ENCODE measurements at regions of chr10 and their contacts with region 1.

Region 1: DNA sequence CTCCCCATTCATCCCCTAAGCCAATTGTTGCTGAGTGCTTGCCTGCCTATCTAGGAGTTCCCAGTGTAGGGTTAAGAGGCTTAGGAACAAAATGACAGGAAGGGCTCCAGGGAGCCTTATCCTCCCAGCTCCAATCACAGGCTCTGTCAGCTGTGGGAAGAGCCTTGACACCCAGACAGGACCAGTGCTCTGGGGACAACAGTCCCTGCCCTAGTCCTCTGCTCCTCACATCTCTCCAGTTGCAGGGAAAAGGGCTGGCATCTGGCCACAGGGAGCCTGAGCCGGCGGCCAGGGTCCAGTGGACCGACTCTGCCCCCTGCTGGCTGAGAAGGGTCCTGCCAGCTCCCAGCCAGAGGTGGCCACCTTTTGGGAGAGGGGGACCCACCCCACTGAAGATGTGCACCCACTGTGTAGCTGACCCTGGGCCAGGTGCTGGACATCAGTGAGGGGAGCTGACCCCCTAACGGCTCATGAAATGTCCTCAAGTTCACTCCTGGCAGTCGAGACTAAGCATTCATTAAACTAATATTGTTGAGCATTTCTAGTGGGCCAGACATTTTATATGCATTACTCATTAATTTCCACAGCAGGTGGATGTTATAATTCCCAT is 17.6 kb downstream of the DNAJB12 start:
- DNase-seq: peak in 8 of 9 experiments; percentile 46 to 85 (median 72)
- ATAC-seq: no peak
- H3K4me3 ChIP-seq: no peak overlapping the region
- H3K4me3 Mint-ChIP-seq: no peak overlapping the region
- H3K27ac ChIP-seq: no peak overlapping the region
- H3K27ac Mint-ChIP-seq: peak overlapping the region; percentile 66
- H3K4me1 ChIP-seq: peaks cover 55% of the 10 kb centered on the region
- H3K4me1 Mint-ChIP-seq: peaks cover 55% of the 10 kb centered on the region
- H3K27me3 ChIP-seq: no peaks in the 10 kb centered on the region
- H3K27me3 Mint-ChIP-seq: no peaks in the 10 kb centered on the region
- CTCF ChIP-seq: peak; percentile 96

Region 2: DNA sequence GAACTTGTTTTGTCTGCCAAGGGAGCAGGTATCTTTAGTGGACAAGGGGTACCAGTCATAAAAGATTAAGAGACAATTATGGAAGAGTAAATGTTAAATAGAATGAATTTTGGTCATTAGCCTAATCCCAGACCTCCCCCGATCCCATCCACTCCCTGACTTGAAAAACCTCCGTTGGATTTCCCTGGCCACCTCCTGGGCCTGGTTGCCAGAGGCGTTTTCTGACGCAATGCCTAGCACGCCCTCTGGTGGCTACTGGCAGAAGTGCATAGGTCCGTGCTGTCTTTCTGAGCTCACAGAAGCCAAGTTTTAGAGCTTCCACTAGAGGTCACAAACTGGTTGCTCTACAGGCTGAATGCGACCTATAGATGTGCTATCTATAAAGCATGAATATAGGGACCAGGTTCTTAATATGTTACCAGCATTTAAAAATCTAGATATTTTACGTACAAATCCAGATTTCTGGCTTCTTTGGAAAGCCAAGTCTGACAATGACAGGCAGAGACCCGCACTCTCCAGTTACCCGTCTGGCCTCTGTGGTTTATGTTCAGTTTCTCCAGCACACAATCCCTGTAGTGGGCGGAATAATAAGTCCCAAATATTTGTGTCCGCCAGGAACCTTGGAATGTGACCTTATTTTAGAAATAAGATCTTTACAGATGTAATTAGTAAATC is 288.5 kb before region 1 on chr10:
- CTCF ChIA-PET with region 1: interaction called, 51 read pairs
- POLR2A ChIA-PET with region 1: no interaction called
- intact Hi-C with region 1: loop called (anchors 1 kb)
- DNase-seq: peak; percentile 80 to 95 (median 90)
- ATAC-seq: peak; percentile 98
- H3K4me3 ChIP-seq: no peak overlapping the region
- H3K4me3 Mint-ChIP-seq: no peak overlapping the region
- H3K27ac ChIP-seq: no peak overlapping the region
- H3K27ac Mint-ChIP-seq: no peak overlapping the region
- H3K4me1 ChIP-seq: no peaks in the 10 kb centered on the region
- H3K4me1 Mint-ChIP-seq: peaks cover 7% of the 10 kb centered on the region
- H3K27me3 ChIP-seq: no peaks in the 10 kb centered on the region
- H3K27me3 Mint-ChIP-seq: no peaks in the 10 kb centered on the region
- CTCF ChIP-seq: peak; percentile 99

Region 3: GRCh38 chr10:72126184-72126871 is 210.8 kb before region 1 on chr10:
- CTCF ChIA-PET with region 1: interaction called, 84 read pairs
- POLR2A ChIA-PET with region 1: interaction called, 3 read pairs
- intact Hi-C with region 1: no loop called
- DNase-seq: peak in 2 of 9 experiments; percentile 43 to 57
- ATAC-seq: no peak
- H3K4me3 ChIP-seq: no peak overlapping the region
- H3K4me3 Mint-ChIP-seq: no peak overlapping the region
- H3K27ac ChIP-seq: no peak overlapping the region
- H3K27ac Mint-ChIP-seq: no peak overlapping the region
- H3K4me1 ChIP-seq: peaks cover 12% of the 10 kb centered on the region
- H3K4me1 Mint-ChIP-seq: peaks cover 29% of the 10 kb centered on the region
- H3K27me3 ChIP-seq: no peaks in the 10 kb centered on the region
- H3K27me3 Mint-ChIP-seq: no peaks in the 10 kb centered on the region
- CTCF ChIP-seq: no peak

Region 4: DNA sequence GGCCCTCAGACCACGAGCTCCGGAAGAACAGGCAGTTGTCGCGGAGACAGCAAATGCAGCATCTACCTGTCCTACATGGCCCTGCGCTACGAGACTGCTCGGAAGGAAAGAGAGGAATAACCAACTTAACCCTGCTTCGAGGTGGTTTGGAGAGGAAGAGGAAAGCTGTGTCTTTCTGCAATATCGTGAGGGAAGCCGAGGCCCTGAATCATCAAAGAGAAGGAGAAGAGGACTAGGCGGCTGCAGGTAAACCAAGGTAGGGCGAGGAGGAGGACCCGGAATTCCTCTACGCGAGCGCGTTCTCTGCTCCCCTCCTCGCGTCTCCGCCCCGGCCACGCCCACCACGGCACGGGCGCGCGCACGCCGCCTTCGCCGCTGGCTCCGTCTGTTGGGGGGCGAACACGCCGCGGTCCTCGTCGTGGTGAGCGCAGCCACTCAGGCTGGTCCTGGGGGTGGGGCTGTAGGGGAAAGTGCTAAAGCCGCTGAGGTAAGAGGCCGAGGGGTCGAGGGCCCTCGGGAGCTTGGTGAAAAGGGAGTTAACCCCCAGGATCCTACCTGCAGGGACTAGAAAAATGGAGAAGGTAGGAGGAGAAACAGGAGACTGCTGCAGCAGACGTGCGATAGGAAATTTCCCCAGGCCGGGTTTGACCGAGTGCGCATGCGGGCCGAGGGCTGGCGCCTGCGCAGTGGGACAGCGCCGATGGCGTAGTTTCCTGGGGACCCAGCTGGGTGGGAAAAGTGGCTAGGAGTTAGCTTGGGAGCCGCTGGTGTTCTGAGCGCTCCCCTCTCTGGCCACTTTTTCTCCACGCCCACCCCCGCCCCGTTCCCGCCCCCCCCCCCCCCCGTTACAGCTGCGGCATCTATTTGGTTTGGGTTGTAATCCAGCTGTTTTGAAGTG is 121.2 kb before region 1 on chr10 and contains the starts of genes ANAPC16 and ASCC1:
- CTCF ChIA-PET with region 1: interaction called, 9 read pairs
- POLR2A ChIA-PET with region 1: interaction called, 7 read pairs
- intact Hi-C with region 1: loop called (anchors 1 to 2 kb)
- DNase-seq: peak; percentile 90 to 98 (median 95)
- ATAC-seq: peak; percentile 83
- H3K4me3 ChIP-seq: peak within 1 kb of the TSS; percentile 78 to 82
- H3K4me3 Mint-ChIP-seq: peak within 1 kb of the TSS; percentile 100
- H3K27ac ChIP-seq: peak within 1 kb of the TSS; percentile 61 to 93
- H3K27ac Mint-ChIP-seq: peak within 1 kb of the TSS; percentile 100
- H3K4me1 ChIP-seq: peaks cover 58% of the 10 kb centered on the region
- H3K4me1 Mint-ChIP-seq: peaks cover 54% of the 10 kb centered on the region
- H3K27me3 ChIP-seq: no peaks in the 10 kb centered on the region
- H3K27me3 Mint-ChIP-seq: no peaks in the 10 kb centered on the region
- CTCF ChIP-seq: no peak
- total RNA-seq, gene ANAPC16: 46.6 to 48.0 TPM
- total RNA-seq, gene ASCC1: 16.5 to 19.1 TPM

Region 5: DNA sequence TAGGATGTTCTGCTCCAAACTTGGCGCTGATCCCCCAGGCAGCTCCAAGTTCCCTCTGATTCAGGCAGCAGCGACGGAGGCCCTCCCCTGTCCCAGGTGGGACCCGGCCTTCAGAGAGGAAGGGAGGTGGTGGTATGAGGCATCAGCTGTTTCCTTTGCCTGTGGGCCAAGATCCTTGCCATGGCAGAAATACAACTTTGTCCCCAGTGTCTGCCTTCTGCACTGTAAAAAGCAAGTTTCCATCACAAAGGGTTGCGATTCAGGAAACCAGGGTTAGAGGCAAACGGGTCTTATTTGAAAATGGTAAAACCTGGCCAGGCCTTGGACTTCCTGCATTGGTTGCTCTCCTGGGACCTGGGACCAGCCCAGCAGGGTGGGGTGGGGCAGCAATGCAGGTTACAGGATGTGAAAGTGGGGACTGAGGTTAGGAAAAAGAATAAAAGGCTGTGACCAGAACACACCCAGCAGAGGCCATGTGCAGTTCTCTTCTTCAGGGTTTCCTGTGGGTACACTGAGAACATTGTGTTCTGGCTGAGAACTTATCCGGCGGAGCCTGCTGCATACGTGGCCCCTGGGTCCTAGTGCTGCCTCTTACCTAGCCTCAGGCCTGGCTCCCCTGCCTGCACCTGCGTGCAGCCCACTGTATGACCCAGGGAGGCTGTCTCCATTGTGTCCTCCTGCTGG is 88.5 kb before region 1 on chr10:
- CTCF ChIA-PET with region 1: interaction called, 56 read pairs
- POLR2A ChIA-PET with region 1: interaction called, 5 read pairs
- intact Hi-C with region 1: loop called (anchors 1 kb)
- DNase-seq: peak; percentile 40 to 91 (median 77)
- ATAC-seq: peak; percentile 88
- H3K4me3 ChIP-seq: peak overlapping the region; percentile 25 to 28
- H3K4me3 Mint-ChIP-seq: peak overlapping the region; percentile 81
- H3K27ac ChIP-seq: peak overlapping the region; percentile 61 to 64
- H3K27ac Mint-ChIP-seq: peak overlapping the region; percentile 96
- H3K4me1 ChIP-seq: peaks cover 90% of the 10 kb centered on the region
- H3K4me1 Mint-ChIP-seq: peaks cover 82% of the 10 kb centered on the region
- H3K27me3 ChIP-seq: no peaks in the 10 kb centered on the region
- H3K27me3 Mint-ChIP-seq: no peaks in the 10 kb centered on the region
- CTCF ChIP-seq: no peak

Region 6: GRCh38 chr10:72354478-72355213 is 17.5 kb after region 1 on chr10 and contains the start of gene DNAJB12:
- CTCF ChIA-PET with region 1: interaction called, 68 read pairs
- POLR2A ChIA-PET with region 1: no interaction called
- intact Hi-C with region 1: loop called in 1 of 2 experiments (anchors 2 kb)
- DNase-seq: peak; percentile 76 to 95 (median 88)
- ATAC-seq: peak; percentile 82
- H3K4me3 ChIP-seq: peak within 1 kb of the TSS; percentile 96 to 98
- H3K4me3 Mint-ChIP-seq: peak within 1 kb of the TSS; percentile 98
- H3K27ac ChIP-seq: peak within 1 kb of the TSS; percentile 87 to 97
- H3K27ac Mint-ChIP-seq: peak within 1 kb of the TSS; percentile 96
- H3K4me1 ChIP-seq: peaks cover 19% of the 10 kb centered on the region
- H3K4me1 Mint-ChIP-seq: peaks cover 45% of the 10 kb centered on the region
- H3K27me3 ChIP-seq: no peaks in the 10 kb centered on the region
- H3K27me3 Mint-ChIP-seq: no peaks in the 10 kb centered on the region
- CTCF ChIP-seq: no peak
- total RNA-seq, gene DNAJB12: 33.9 to 37.5 TPM

Measured in CD8-positive, alpha-beta T cell (primary cell).